Dendritic cell treated with granulocyte-macrophage colony-stimulating factor and Interleukin-4, amounts not matched to agents 40 ng/mL and 50 ng/mL, for 4 days (primary cell): ENCODE measurements at regions of chr5 and their contacts with region 1.

Region 1: GRCh38 chr5:77030097-77031071 is at the start of gene AGGF1:
- H3K4me3 Mint-ChIP-seq: peak within 1 kb of the TSS; percentile 95
- H3K27ac Mint-ChIP-seq: peak within 1 kb of the TSS; percentile 95
- H3K4me1 Mint-ChIP-seq: peaks cover 15% of the 10 kb centered on the region
- H3K27me3 Mint-ChIP-seq: no peaks in the 10 kb centered on the region

Region 2: GRCh38 chr5:76867827-76868693 is 162.3 kb before region 1 on chr5:
- intact Hi-C with region 1: no loop called
- H3K4me3 Mint-ChIP-seq: no peak overlapping the region
- H3K27ac Mint-ChIP-seq: no peak overlapping the region
- H3K4me1 Mint-ChIP-seq: no peaks in the 10 kb centered on the region
- H3K27me3 Mint-ChIP-seq: no peaks in the 10 kb centered on the region

Region 3: GRCh38 chr5:77066823-77067442 is 36.5 kb after region 1 on chr5:
- intact Hi-C with region 1: loop called (anchors 2 kb)
- H3K4me3 Mint-ChIP-seq: no peak overlapping the region
- H3K27ac Mint-ChIP-seq: peak overlapping the region; percentile 75
- H3K4me1 Mint-ChIP-seq: peaks cover 18% of the 10 kb centered on the region
- H3K27me3 Mint-ChIP-seq: no peaks in the 10 kb centered on the region

Region 4: GRCh38 chr5:77255617-77256016 is 225.2 kb after region 1 on chr5:
- intact Hi-C with region 1: no loop called
- H3K4me3 Mint-ChIP-seq: no peak overlapping the region
- H3K27ac Mint-ChIP-seq: no peak overlapping the region
- H3K4me1 Mint-ChIP-seq: peaks cover 34% of the 10 kb centered on the region
- H3K27me3 Mint-ChIP-seq: peaks cover 11% of the 10 kb centered on the region